CD4-positive, alpha-beta T cell (primary cell): ENCODE measurements at regions of chr11 and their contacts with region 1.

Region 1: GRCh38 chr11:68843703-68844312 is 2.1 kb upstream of the CPT1A start:
- DNase-seq: peak; percentile 34 to 86 (median 72)
- ATAC-seq: peak; percentile 33
- H3K4me3 ChIP-seq: peak overlapping the region; percentile 61
- H3K4me3 Mint-ChIP-seq: peak overlapping the region; percentile 91
- H3K27ac ChIP-seq: peak overlapping the region in 1 of 2 donors; percentile 2
- H3K27ac Mint-ChIP-seq: peak overlapping the region; percentile 70
- H3K4me1 ChIP-seq: peaks cover 52% of the 10 kb centered on the region
- H3K4me1 Mint-ChIP-seq: peaks cover 43% of the 10 kb centered on the region
- H3K27me3 ChIP-seq: no peaks in the 10 kb centered on the region
- H3K27me3 Mint-ChIP-seq: no peaks in the 10 kb centered on the region
- CTCF ChIP-seq: peak; percentile 78

Region 2: GRCh38 chr11:68459886-68460740 is 383.7 kb before region 1 on chr11:
- CTCF ChIA-PET with region 1: no interaction called
- POLR2A ChIA-PET with region 1: no interaction called
- intact Hi-C with region 1: loop called in 1 of 2 experiments (anchors 10 kb)
- DNase-seq: peak; percentile 89 to 99 (median 94)
- ATAC-seq: peak; percentile 90
- H3K4me3 ChIP-seq: peak overlapping the region; percentile 92
- H3K4me3 Mint-ChIP-seq: peak overlapping the region; percentile 100
- H3K27ac ChIP-seq: peak overlapping the region; percentile 95 to 99
- H3K27ac Mint-ChIP-seq: peak overlapping the region; percentile 100
- H3K4me1 ChIP-seq: peaks cover 40% of the 10 kb centered on the region
- H3K4me1 Mint-ChIP-seq: peaks cover 39% of the 10 kb centered on the region
- H3K27me3 ChIP-seq: no peaks in the 10 kb centered on the region
- H3K27me3 Mint-ChIP-seq: peaks cover 8% of the 10 kb centered on the region
- CTCF ChIP-seq: no peak

Region 3: DNA sequence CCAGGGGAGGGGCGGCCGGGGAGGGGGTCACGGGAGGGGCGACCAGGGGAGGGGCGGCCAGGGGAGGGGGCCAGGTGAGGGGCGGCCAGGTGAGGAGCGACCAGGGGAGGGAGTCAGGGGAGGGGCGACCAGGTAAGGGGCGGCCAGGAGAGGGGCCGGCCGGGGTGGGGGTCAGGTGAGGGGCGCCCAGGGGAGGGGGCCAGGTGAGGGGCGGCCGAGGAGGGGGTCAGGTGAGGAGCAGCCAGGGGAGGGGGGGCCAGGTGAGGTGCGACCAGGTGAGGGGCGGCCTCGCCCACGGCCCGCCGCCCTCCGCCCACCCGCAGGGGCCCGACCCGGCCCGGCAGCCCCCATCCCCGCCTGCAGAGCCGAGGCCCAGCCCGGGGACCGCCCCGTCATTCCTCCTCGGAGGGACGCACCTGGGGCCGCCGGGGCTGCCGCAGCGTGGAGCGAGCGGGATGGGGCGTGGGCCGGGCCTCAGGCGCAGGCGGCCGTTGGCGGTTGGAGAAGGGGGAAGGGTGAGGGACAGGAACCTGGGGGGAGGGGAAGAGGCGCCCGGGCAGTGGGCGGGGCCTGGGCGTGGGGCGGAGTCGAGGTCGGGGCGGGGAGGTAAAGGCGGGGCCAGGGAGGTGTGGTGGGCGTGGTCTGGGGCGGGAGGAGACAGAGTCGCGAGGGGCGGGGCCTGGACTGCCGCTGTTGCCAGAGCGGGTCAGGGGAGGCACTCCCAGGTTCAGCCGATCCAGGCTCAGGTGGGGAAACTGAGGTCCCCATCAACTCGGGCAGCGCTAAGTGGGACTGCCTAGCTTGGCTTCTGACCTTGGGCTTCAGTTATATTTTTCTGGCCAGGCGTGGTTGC is 92.6 kb before region 1 on chr11 and contains the start of gene TESMIN:
- CTCF ChIA-PET with region 1: interaction called, 4 read pairs
- POLR2A ChIA-PET with region 1: interaction called, 8 read pairs
- intact Hi-C with region 1: loop called (anchors 2 to 5 kb)
- DNase-seq: peak; percentile 86 to 97 (median 94)
- ATAC-seq: peak; percentile 94
- H3K4me3 ChIP-seq: peak within 1 kb of the TSS; percentile 41
- H3K4me3 Mint-ChIP-seq: peak within 1 kb of the TSS; percentile 81
- H3K27ac ChIP-seq: no peak within 1 kb of the TSS
- H3K27ac Mint-ChIP-seq: no peak within 1 kb of the TSS
- H3K4me1 ChIP-seq: peaks cover 18% of the 10 kb centered on the region
- H3K4me1 Mint-ChIP-seq: peaks cover 11% of the 10 kb centered on the region
- H3K27me3 ChIP-seq: no peaks in the 10 kb centered on the region
- H3K27me3 Mint-ChIP-seq: no peaks in the 10 kb centered on the region
- CTCF ChIP-seq: no peak
- total RNA-seq, gene TESMIN: 3.7 to 4.3 TPM

Region 4: GRCh38 chr11:68780829-68781228 is 63.0 kb before region 1 on chr11:
- CTCF ChIA-PET with region 1: no interaction called
- POLR2A ChIA-PET with region 1: no interaction called
- intact Hi-C with region 1: no loop called
- DNase-seq: no peak
- ATAC-seq: no peak
- H3K4me3 ChIP-seq: no peak overlapping the region
- H3K4me3 Mint-ChIP-seq: no peak overlapping the region
- H3K27ac ChIP-seq: no peak overlapping the region
- H3K27ac Mint-ChIP-seq: no peak overlapping the region
- H3K4me1 ChIP-seq: no peaks in the 10 kb centered on the region
- H3K4me1 Mint-ChIP-seq: no peaks in the 10 kb centered on the region
- H3K27me3 ChIP-seq: no peaks in the 10 kb centered on the region
- H3K27me3 Mint-ChIP-seq: no peaks in the 10 kb centered on the region
- CTCF ChIP-seq: no peak

Region 5: DNA sequence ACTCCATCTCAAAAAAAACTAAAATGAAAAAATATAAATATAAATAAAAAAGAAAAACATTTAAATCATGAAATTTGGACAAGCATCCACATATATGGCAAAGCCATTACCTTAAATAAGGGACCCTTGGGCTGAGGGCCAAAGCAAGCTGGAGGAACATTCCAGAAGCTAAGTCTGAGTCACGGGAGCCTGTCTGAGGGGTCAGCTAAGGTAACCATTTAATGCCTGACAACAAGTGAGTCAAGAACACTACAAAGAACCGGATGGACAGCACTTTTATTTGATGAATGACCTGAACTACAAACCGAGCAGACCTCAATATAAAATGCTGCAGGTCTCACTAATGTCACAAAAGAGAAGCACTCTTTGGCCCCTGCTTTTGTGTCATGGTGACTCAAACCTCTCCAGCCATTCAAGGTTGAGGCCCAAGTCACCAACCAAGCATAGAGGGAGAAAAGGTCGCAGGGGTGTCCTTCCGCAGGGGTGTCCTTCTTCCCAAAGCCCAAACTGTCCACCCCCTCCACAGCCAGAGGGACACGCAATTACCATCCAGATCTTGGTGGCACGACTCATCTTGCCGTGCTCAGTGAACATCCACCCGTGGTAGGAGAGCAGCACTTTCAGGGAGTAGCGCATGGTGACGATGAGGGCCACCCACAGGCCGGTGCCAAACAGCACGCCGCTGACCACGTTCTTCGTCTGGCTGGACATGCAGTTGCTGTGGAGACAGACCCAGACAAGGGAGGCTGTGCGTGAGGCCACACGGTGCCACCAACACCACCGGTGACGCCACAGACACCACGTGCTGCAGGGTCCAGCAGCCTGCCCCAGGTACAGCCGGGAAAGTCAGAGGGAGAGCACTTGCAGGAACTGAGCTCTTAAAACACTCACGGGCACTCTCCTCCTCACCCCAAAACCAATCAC is 36.6 kb before region 1 on chr11:
- CTCF ChIA-PET with region 1: interaction called, 15 read pairs
- POLR2A ChIA-PET with region 1: no interaction called
- intact Hi-C with region 1: loop called in 1 of 2 experiments (anchors 5 kb)
- DNase-seq: no peak
- ATAC-seq: no peak
- H3K4me3 ChIP-seq: no peak overlapping the region
- H3K4me3 Mint-ChIP-seq: no peak overlapping the region
- H3K27ac ChIP-seq: no peak overlapping the region
- H3K27ac Mint-ChIP-seq: no peak overlapping the region
- H3K4me1 ChIP-seq: no peaks in the 10 kb centered on the region
- H3K4me1 Mint-ChIP-seq: no peaks in the 10 kb centered on the region
- H3K27me3 ChIP-seq: no peaks in the 10 kb centered on the region
- H3K27me3 Mint-ChIP-seq: no peaks in the 10 kb centered on the region
- CTCF ChIP-seq: no peak

Region 6: GRCh38 chr11:68903288-68904247 is 59.8 kb after region 1 on chr11 and contains the starts of genes IGHMBP2 and MRPL21:
- CTCF ChIA-PET with region 1: interaction called, 3 read pairs
- POLR2A ChIA-PET with region 1: interaction called, 3 read pairs
- intact Hi-C with region 1: loop called (anchors 5 kb)
- DNase-seq: peak; percentile 71 to 93 (median 82)
- ATAC-seq: peak; percentile 92
- H3K4me3 ChIP-seq: peak within 1 kb of the TSS; percentile 95
- H3K4me3 Mint-ChIP-seq: peak within 1 kb of the TSS; percentile 98
- H3K27ac ChIP-seq: peak within 1 kb of the TSS; percentile 57 to 67
- H3K27ac Mint-ChIP-seq: peak within 1 kb of the TSS; percentile 92
- H3K4me1 ChIP-seq: peaks cover 31% of the 10 kb centered on the region
- H3K4me1 Mint-ChIP-seq: peaks cover 50% of the 10 kb centered on the region
- H3K27me3 ChIP-seq: no peaks in the 10 kb centered on the region
- H3K27me3 Mint-ChIP-seq: no peaks in the 10 kb centered on the region
- CTCF ChIP-seq: no peak
- total RNA-seq, gene IGHMBP2: 17.5 to 18.5 TPM
- total RNA-seq, gene MRPL21: 47.5 to 48.0 TPM